BJ (cell line): ENCODE measurements at regions of chr12 and their contacts with region 1.

Region 1: GRCh38 chr12:127677537-127678131 is 589.3 kb upstream of the TMEM132C start:
- DNase-seq: peak; percentile 41
- H3K4me3 ChIP-seq: no peak overlapping the region
- H3K27me3 ChIP-seq: no peaks in the 10 kb centered on the region
- CTCF ChIP-seq: peak; percentile 81

Region 2: GRCh38 chr12:126784328-126784921 is 893.2 kb before region 1 on chr12:
- CTCF ChIA-PET with region 1: no interaction called
- POLR2A ChIA-PET with region 1: no interaction called
- DNase-seq: no peak
- H3K4me3 ChIP-seq: no peak overlapping the region
- H3K27me3 ChIP-seq: no peaks in the 10 kb centered on the region
- CTCF ChIP-seq: peak; percentile 50

Region 3: GRCh38 chr12:127381048-127381668 is 296.5 kb before region 1 on chr12:
- CTCF ChIA-PET with region 1: interaction called, 18 read pairs
- POLR2A ChIA-PET with region 1: no interaction called
- DNase-seq: no peak
- H3K4me3 ChIP-seq: peak overlapping the region; percentile 31
- H3K27me3 ChIP-seq: no peaks in the 10 kb centered on the region
- CTCF ChIP-seq: peak; percentile 75

Region 4: DNA sequence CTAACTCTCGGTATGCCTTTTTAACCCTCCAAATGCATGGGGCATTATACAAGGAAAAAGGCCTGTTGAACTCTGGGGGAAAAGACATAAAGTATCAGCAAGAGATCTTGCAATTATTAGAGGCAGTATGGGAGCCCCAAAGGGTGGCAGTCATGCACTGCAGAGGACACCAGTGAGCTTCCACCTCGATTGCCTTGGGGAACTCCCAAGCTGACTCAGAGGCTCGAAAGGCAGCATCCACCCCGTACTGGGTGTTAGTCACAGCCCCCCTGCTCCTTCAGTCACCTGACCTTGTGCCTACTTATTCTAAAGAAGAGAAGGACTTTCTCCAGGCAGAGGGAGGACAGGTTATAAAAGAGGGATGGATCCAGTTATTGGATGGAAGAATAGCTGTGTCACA is 192.1 kb before region 1 on chr12:
- CTCF ChIA-PET with region 1: interaction called, 82 read pairs
- POLR2A ChIA-PET with region 1: no interaction called
- DNase-seq: peak; percentile 59
- H3K4me3 ChIP-seq: no peak overlapping the region
- H3K27me3 ChIP-seq: no peaks in the 10 kb centered on the region
- CTCF ChIP-seq: peak; percentile 66

Region 5: DNA sequence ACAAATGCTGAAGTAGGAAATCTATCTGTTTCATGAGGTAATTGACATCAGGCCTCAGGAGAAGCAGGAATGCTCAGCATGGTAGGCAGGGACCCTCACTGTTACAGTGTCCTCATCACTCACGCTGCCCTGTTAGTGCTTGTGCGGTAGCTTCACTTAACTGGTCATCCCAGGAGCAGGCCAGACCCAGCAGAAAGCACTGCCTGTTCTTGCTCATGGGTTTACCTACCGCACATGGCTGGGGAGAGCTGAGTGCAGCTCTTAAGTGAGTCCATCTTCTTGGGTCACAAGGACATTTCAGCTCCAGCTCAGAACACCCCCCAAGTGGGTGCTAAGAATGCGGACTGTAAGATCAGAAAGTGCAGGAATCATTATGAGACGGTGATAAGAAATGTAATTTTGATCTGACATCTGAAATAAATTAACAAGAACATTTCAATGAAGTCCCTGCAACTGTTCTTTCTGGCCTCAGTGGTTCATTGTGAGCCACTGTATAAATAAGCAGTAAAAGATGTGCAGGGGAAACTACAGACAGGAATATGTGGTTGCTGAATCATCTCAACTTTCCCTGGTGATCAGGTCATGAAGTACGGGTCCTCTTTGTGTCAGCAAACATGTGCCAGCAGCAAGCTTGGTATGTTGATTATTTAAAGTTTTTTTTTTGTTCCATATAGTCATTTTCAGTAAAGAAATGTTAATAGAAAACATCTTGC is 168.4 kb before region 1 on chr12:
- CTCF ChIA-PET with region 1: interaction called, 11 read pairs
- POLR2A ChIA-PET with region 1: no interaction called
- DNase-seq: peak; percentile 64
- H3K4me3 ChIP-seq: no peak overlapping the region
- H3K27me3 ChIP-seq: no peaks in the 10 kb centered on the region
- CTCF ChIP-seq: no peak

Region 6: GRCh38 chr12:127559349-127560040 is 118.1 kb before region 1 on chr12:
- CTCF ChIA-PET with region 1: interaction called, 11 read pairs
- POLR2A ChIA-PET with region 1: no interaction called
- DNase-seq: peak; percentile 94
- H3K4me3 ChIP-seq: no peak overlapping the region
- H3K27me3 ChIP-seq: no peaks in the 10 kb centered on the region
- CTCF ChIP-seq: peak; percentile 85

Region 7: GRCh38 chr12:127667131-127667685 is 10.4 kb before region 1 on chr12:
- CTCF ChIA-PET with region 1: interaction called, 27 read pairs
- POLR2A ChIA-PET with region 1: no interaction called
- DNase-seq: peak; percentile 45
- H3K4me3 ChIP-seq: no peak overlapping the region
- H3K27me3 ChIP-seq: no peaks in the 10 kb centered on the region
- CTCF ChIP-seq: no peak

Region 8: DNA sequence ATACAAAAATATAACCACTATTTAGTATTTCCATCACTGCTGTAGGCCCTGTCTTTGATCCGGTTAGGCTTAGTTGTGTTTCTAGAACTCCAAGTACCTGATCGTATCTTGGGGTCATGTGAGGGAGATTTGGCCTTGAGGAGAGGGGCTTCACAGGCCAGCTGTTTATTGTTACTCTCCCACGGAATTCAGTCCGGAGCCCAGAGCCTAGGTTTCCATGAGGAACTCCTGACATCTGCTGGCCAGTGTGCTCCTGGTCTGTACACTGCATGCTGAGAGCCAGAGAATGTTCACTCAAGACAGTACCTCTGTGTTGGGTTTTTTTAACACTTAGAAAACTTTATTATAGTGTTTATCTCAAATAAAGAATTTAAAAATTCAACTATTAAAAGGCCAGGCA is 248.3 kb after region 1 on chr12:
- CTCF ChIA-PET with region 1: interaction called, 11 read pairs
- POLR2A ChIA-PET with region 1: no interaction called
- DNase-seq: no peak
- H3K4me3 ChIP-seq: no peak overlapping the region
- H3K27me3 ChIP-seq: no peaks in the 10 kb centered on the region
- CTCF ChIP-seq: peak; percentile 61

Region 9: GRCh38 chr12:127998987-127999386 is 321.4 kb after region 1 on chr12:
- CTCF ChIA-PET with region 1: no interaction called
- POLR2A ChIA-PET with region 1: no interaction called
- DNase-seq: no peak
- H3K4me3 ChIP-seq: no peak overlapping the region
- H3K27me3 ChIP-seq: no peaks in the 10 kb centered on the region
- CTCF ChIP-seq: no peak